ENCODE measurements at regions of chr18 and their contacts with region 1.

Region 1: GRCh38 chr18:41829647-41830516 is 125.2 kb upstream of the PIK3C3 start:
- DNase-seq: no peak

Region 2: DNA sequence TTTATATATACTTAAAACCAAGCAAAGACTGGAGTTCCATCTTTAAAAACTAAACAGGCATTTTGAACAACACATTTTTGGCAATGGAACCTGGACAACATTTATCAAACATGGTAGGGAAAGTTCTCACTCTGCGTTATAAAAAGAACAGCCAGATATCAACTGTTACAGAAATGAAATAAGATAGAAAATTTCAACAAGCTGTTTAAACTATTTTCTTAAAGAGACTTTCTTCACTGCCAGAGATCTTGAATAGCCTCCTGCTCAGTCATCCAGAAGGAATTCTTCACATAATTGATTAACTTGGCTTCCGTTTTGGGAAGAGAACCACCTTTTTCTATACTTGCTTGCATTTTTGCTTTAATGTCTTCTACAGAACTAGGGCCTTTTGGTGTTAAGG is 40.9 kb before region 1 on chr18:
- CTCF ChIA-PET with region 1: no interaction called
- POLR2A ChIA-PET with region 1: no interaction called
- DNase-seq: no peak

Region 3: GRCh38 chr18:41922176-41922575 is 92.3 kb after region 1 on chr18:
- CTCF ChIA-PET with region 1: interaction called, 10 read pairs
- POLR2A ChIA-PET with region 1: no interaction called
- DNase-seq: no peak

Measured in HEK293T (cell line).